Calu3 (cell line): ENCODE measurements at regions of chr6 and their contacts with region 1.

Region 1: DNA sequence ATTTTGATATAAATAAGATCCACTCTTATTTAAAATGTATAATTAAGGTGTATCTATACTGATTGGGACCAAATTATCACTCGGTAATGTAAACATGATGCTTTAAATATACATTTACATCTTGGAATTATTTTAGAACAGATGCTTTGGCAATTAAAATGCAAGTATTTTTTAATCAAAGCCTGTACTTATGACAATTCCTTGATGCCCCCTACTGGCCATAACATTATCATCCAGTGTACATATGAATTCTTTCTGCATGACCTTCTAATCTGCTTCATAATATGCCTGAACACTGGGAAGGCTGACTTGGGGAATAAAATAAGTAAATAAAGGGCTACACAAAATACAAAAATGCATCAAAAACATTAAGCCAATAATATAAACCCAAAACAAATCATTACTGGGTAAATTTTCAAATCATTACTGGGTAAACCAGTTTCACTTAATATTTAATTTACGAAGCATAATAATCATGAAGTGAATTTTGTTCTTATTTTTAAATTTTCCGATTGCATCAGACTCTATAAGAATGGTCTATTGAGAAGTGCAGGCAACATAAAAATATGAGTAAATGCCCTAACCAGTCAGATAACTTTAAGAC is 65.1 kb downstream of the CGA start:
- DNase-seq: peak; percentile 37
- H3K4me3 Mint-ChIP-seq: no peak overlapping the region
- H3K27ac Mint-ChIP-seq: no peak overlapping the region
- H3K4me1 Mint-ChIP-seq: no peaks in the 10 kb centered on the region
- H3K27me3 Mint-ChIP-seq: peaks cover 27% of the 10 kb centered on the region
- CTCF ChIP-seq: peak; percentile 37

Region 2: GRCh38 chr6:85756982-85757381 is 1272.8 kb before region 1 on chr6:
- CTCF ChIA-PET with region 1: no interaction called
- intact Hi-C with region 1: loop called (anchors 5 kb)
- DNase-seq: no peak
- H3K4me3 Mint-ChIP-seq: no peak overlapping the region
- H3K27ac Mint-ChIP-seq: no peak overlapping the region
- H3K4me1 Mint-ChIP-seq: peaks cover 7% of the 10 kb centered on the region
- H3K27me3 Mint-ChIP-seq: peaks cover 23% of the 10 kb centered on the region
- CTCF ChIP-seq: peak; percentile 39

Region 3: DNA sequence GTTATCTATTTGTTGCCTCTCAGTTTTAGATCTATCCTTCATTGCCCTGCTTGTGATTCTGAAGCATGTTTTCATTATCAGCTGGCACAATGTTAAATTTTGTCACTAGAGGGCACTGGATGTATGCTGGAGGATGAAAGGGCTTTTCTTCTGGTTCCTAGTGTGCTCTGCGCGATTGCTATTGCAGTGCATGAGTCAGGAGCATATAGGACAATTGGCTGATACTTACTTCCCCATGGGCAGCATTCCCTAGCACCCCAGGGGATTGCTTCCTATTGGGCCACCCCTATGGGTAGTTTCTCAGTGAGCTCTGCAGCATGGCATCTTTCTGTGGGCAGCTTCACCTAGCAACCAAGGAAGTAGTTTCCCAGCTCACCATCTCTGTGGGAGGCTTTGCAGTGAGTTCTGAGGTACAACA is 1106.8 kb before region 1 on chr6:
- CTCF ChIA-PET with region 1: no interaction called
- intact Hi-C with region 1: loop called (anchors 1 kb)
- DNase-seq: peak; percentile 53
- H3K4me3 Mint-ChIP-seq: no peak overlapping the region
- H3K27ac Mint-ChIP-seq: no peak overlapping the region
- H3K4me1 Mint-ChIP-seq: no peaks in the 10 kb centered on the region
- H3K27me3 Mint-ChIP-seq: peaks cover 38% of the 10 kb centered on the region
- CTCF ChIP-seq: peak; percentile 67

Region 4: DNA sequence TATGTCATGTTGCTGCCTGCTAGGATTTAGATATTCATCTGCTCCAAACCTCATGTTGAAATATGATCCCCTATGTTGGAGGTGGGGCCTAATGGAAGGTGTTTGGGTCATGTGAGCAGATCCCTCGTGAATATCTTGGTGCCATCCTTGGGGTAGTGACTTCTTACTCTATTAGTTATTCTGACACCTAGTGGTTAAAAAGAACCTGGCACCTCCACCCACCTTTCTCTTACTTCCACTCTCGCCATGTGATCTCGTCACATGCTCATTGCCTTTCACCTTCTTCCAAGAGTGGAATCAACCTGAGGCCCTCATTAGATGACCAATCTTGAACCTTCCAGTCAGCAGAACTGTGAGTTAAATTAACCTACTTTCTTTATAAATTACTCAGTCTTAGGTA is 837.7 kb before region 1 on chr6:
- CTCF ChIA-PET with region 1: no interaction called
- intact Hi-C with region 1: loop called (anchors 10 kb)
- DNase-seq: peak; percentile 33
- H3K4me3 Mint-ChIP-seq: no peak overlapping the region
- H3K27ac Mint-ChIP-seq: no peak overlapping the region
- H3K4me1 Mint-ChIP-seq: no peaks in the 10 kb centered on the region
- H3K27me3 Mint-ChIP-seq: peaks cover 24% of the 10 kb centered on the region
- CTCF ChIP-seq: peak; percentile 46

Region 5: GRCh38 chr6:86820750-86821149 is 209.1 kb before region 1 on chr6:
- CTCF ChIA-PET with region 1: no interaction called
- intact Hi-C with region 1: no loop called
- DNase-seq: no peak
- H3K4me3 Mint-ChIP-seq: no peak overlapping the region
- H3K27ac Mint-ChIP-seq: no peak overlapping the region
- H3K4me1 Mint-ChIP-seq: no peaks in the 10 kb centered on the region
- H3K27me3 Mint-ChIP-seq: no peaks in the 10 kb centered on the region
- CTCF ChIP-seq: no peak

Region 6: GRCh38 chr6:86856937-86857563 is 172.8 kb before region 1 on chr6:
- CTCF ChIA-PET with region 1: no interaction called
- intact Hi-C with region 1: loop called (anchors 2 kb)
- DNase-seq: peak; percentile 67
- H3K4me3 Mint-ChIP-seq: no peak overlapping the region
- H3K27ac Mint-ChIP-seq: no peak overlapping the region
- H3K4me1 Mint-ChIP-seq: no peaks in the 10 kb centered on the region
- H3K27me3 Mint-ChIP-seq: no peaks in the 10 kb centered on the region
- CTCF ChIP-seq: peak; percentile 67

Region 7: GRCh38 chr6:87174078-87174579 is 144.3 kb after region 1 on chr6:
- CTCF ChIA-PET with region 1: no interaction called
- intact Hi-C with region 1: no loop called
- DNase-seq: no peak
- H3K4me3 Mint-ChIP-seq: no peak overlapping the region
- H3K27ac Mint-ChIP-seq: no peak overlapping the region
- H3K4me1 Mint-ChIP-seq: peaks cover 55% of the 10 kb centered on the region
- H3K27me3 Mint-ChIP-seq: no peaks in the 10 kb centered on the region
- CTCF ChIP-seq: no peak